T-cell (primary cell): ENCODE measurements at regions of chr22 and their contacts with region 1.

Region 1: GRCh38 chr22:36470162-36470993 is 11.1 kb downstream of the TXN2 start:
- DNase-seq: peak; percentile 62 to 92 (median 79)
- ATAC-seq: peak; percentile 90 to 97 (median 94)
- H3K4me3 ChIP-seq: no peak overlapping the region
- H3K4me3 Mint-ChIP-seq: no peak overlapping the region
- H3K27ac ChIP-seq: no peak overlapping the region
- H3K27ac Mint-ChIP-seq: peak overlapping the region; percentile 64 to 75
- H3K4me1 ChIP-seq: peaks cover 7 to 23% of the 10 kb centered on the region in 2 experiments
- H3K4me1 Mint-ChIP-seq: peaks cover 21 to 22% (median 22%) of the 10 kb centered on the region in 3 donors
- H3K27me3 ChIP-seq: no peaks in the 10 kb centered on the region
- H3K27me3 Mint-ChIP-seq: no peaks in the 10 kb centered on the region

Region 2: GRCh38 chr22:36301384-36301828 is 169.0 kb before region 1 on chr22:
- CTCF ChIA-PET with region 1: interaction called, 6 to 26 read pairs
- POLR2A ChIA-PET with region 1: no interaction called
- DNase-seq: peak; percentile 56 to 90 (median 80)
- ATAC-seq: peak; percentile 77 to 86 (median 82)
- H3K4me3 ChIP-seq: no peak overlapping the region
- H3K4me3 Mint-ChIP-seq: no peak overlapping the region
- H3K27ac ChIP-seq: peak overlapping the region; percentile 20
- H3K27ac Mint-ChIP-seq: peak overlapping the region; percentile 16 to 68
- H3K4me1 ChIP-seq: peaks cover 0 to 22% of the 10 kb centered on the region in 2 experiments
- H3K4me1 Mint-ChIP-seq: peaks cover 11 to 15% (median 12%) of the 10 kb centered on the region in 3 donors
- H3K27me3 ChIP-seq: no peaks in the 10 kb centered on the region
- H3K27me3 Mint-ChIP-seq: no peaks in the 10 kb centered on the region

Region 3: GRCh38 chr22:36387752-36388518 is 82.4 kb before region 1 on chr22 and contains the start of gene MYH9:
- CTCF ChIA-PET with region 1: interaction called, 3 to 10 read pairs
- POLR2A ChIA-PET with region 1: interaction called in 1 of 2 experiments, 6 read pairs
- DNase-seq: peak; percentile 95 to 99 (median 98)
- ATAC-seq: peak; percentile 83 to 89 (median 85)
- H3K4me3 ChIP-seq: peak within 1 kb of the TSS; percentile 86 to 97
- H3K4me3 Mint-ChIP-seq: peak within 1 kb of the TSS; percentile 88 to 98 (median 95)
- H3K27ac ChIP-seq: peak within 1 kb of the TSS; percentile 79
- H3K27ac Mint-ChIP-seq: peak within 1 kb of the TSS; percentile 89 to 98
- H3K4me1 ChIP-seq: peaks cover 12 to 37% of the 10 kb centered on the region in 2 experiments
- H3K4me1 Mint-ChIP-seq: peaks cover 26 to 48% (median 41%) of the 10 kb centered on the region in 3 donors
- H3K27me3 ChIP-seq: no peaks in the 10 kb centered on the region
- H3K27me3 Mint-ChIP-seq: no peaks in the 10 kb centered on the region
- total RNA-seq, gene MYH9: 816 to 1,109 (median 896) TPM

Region 4: DNA sequence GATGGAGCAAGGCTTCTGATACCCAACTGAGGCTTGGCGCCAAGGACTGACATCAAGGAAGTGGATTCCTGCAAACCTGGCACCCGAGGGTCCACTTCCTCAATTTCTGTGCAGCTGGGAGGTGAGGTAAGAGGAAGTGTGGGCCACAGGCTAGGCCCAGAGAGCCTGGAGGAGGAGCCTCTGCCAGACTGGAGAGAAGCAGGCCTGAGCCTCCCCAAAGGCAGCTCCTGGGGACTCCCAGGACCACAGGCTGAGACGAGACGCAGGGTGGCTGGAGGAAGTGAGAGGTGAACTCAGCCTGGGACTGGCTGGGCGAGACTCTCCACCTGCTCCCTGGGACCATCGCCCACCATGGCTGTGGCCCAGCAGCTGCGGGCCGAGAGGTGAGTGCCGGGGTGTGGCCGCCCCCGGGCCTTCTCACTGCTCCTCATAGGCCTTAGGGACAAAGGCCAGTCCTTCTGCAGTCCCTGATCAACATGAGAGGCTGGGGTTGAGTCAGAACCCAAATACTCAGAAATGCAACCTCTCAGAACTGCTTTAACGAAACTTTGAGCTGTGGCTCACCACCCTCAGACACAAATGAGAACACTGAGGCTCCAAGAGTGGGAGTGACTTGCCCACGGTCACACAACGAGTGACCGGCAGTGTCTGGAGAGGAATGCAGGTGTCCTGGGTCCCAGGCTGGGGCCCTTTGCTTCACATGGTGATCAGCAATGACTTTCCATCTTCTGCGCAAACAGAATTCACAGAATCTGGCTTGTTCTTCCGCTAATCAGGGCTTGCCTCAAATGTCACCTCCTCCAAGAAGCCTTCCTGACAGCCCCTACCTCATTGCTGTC is 390.7 kb after region 1 on chr22 and contains the start of gene NCF4:
- CTCF ChIA-PET with region 1: no interaction called
- POLR2A ChIA-PET with region 1: no interaction called
- DNase-seq: peak in 25 of 35 experiments; percentile 3 to 66 (median 27)
- ATAC-seq: peak; percentile 49 to 63 (median 60)
- H3K4me3 ChIP-seq: peak within 1 kb of the TSS in 1 of 2 donors; percentile 40
- H3K4me3 Mint-ChIP-seq: peak within 1 kb of the TSS; percentile 49 to 65 (median 64)
- H3K27ac ChIP-seq: peak within 1 kb of the TSS; percentile 63
- H3K27ac Mint-ChIP-seq: peak within 1 kb of the TSS; percentile 83 to 94
- H3K4me1 ChIP-seq: peaks cover 0 to 31% of the 10 kb centered on the region in 2 experiments
- H3K4me1 Mint-ChIP-seq: peaks cover 19 to 30% (median 28%) of the 10 kb centered on the region in 3 donors
- H3K27me3 ChIP-seq: peaks cover 0 to 2% of the 10 kb centered on the region in 2 experiments
- H3K27me3 Mint-ChIP-seq: peaks cover 0 to 6% of the 10 kb centered on the region in 2 donors
- total RNA-seq, gene NCF4: 8.0 to 23.6 (median 15.9) TPM